ENCODE measurements at regions of chr12 and their contacts with region 1.

Region 1: GRCh38 chr12:127165567-127166392 is 1101.2 kb upstream of the TMEM132C start:
- DNase-seq: no peak
- H3K4me3 ChIP-seq: peak overlapping the region; percentile 48
- H3K27me3 ChIP-seq: no peaks in the 10 kb centered on the region
- CTCF ChIP-seq: no peak

Region 2: DNA sequence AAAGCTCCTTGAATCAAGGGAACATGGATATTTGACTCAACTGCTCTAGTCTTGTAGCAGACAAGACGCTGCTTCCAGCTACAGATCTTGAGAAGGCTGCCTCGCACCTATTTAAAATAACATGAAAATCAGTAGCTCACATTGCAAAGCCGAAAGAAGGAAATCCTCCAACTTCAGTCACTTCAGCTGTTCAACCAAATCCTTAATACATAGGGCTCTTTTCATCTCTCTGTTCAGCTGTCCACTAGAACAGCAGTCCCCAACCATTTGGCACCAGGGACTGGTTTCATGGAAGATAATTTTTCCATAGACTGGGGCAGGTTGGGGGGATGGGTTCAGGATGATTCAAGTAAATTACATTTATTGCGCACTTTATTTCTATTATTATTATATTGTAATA is 14.8 kb before region 1 on chr12:
- CTCF ChIA-PET with region 1: interaction called, 4 read pairs
- POLR2A ChIA-PET with region 1: interaction called, 13 read pairs
- DNase-seq: no peak
- H3K4me3 ChIP-seq: no peak overlapping the region
- H3K27me3 ChIP-seq: no peaks in the 10 kb centered on the region
- CTCF ChIP-seq: no peak